ENCODE measurements at regions of chr2 and their contacts with region 1.

Region 1: GRCh38 chr2:172172513-172173173 is 69.9 kb upstream of the DLX2 start:
- DNase-seq: peak; percentile 57 to 82 (median 73)
- H3K4me3 ChIP-seq: peak overlapping the region; percentile 55
- H3K27ac ChIP-seq: no peak overlapping the region
- H3K4me1 ChIP-seq: peaks cover 1% of the 10 kb centered on the region
- H3K27me3 ChIP-seq: no peaks in the 10 kb centered on the region
- CTCF ChIP-seq: peak; percentile 59 to 88 (median 86)
- EP300 ChIP-seq: no peak
- POLR2A ChIP-seq: no peak

Region 2: GRCh38 chr2:172465417-172466334 is 293.0 kb after region 1 on chr2:
- intact Hi-C with region 1: loop called (anchors 2 to 5 kb)
- DNase-seq: peak; percentile 60 to 85 (median 64)
- H3K4me3 ChIP-seq: peak overlapping the region; percentile 0
- H3K27ac ChIP-seq: no peak overlapping the region
- H3K4me1 ChIP-seq: peaks cover 2% of the 10 kb centered on the region
- H3K27me3 ChIP-seq: no peaks in the 10 kb centered on the region
- CTCF ChIP-seq: peak; percentile 74 to 81 (median 76)
- EP300 ChIP-seq: no peak
- POLR2A ChIP-seq: no peak

Region 3: GRCh38 chr2:173720306-173720705 is 1547.7 kb after region 1 on chr2:
- intact Hi-C with region 1: no loop called
- DNase-seq: no peak
- H3K4me3 ChIP-seq: no peak overlapping the region
- H3K27ac ChIP-seq: no peak overlapping the region
- H3K4me1 ChIP-seq: no peaks in the 10 kb centered on the region
- H3K27me3 ChIP-seq: no peaks in the 10 kb centered on the region
- CTCF ChIP-seq: no peak
- EP300 ChIP-seq: no peak
- POLR2A ChIP-seq: no peak

Measured in ovary (tissue), 10 donors.